ENCODE measurements at regions of chr14 and their contacts with region 1.

Region 1: GRCh38 chr14:102362545-102363181 is at the starts of genes CINP and TECPR2:
- DNase-seq: peak; percentile 99
- H3K4me3 ChIP-seq: peak within 1 kb of the TSS; percentile 80 to 95 (median 90)
- H3K27ac ChIP-seq: peak within 1 kb of the TSS; percentile 94 to 100 (median 98)
- H3K4me1 ChIP-seq: peaks cover 21 to 51% (median 43%) of the 10 kb centered on the region in 4 donors
- H3K27me3 ChIP-seq: no peaks in the 10 kb centered on the region
- CTCF ChIP-seq: no peak
- EP300 ChIP-seq: no peak
- POLR2A ChIP-seq: peak; percentile 72
- total RNA-seq, gene CINP: 21.6 to 27.7 (median 25.4) TPM
- total RNA-seq, gene TECPR2: 28.7 to 54.8 (median 36.6) TPM

Region 2: GRCh38 chr14:102403028-102403427 is 40.4 kb after region 1 on chr14:
- intact Hi-C with region 1: loop called (anchors 5 kb)
- DNase-seq: no peak
- H3K4me3 ChIP-seq: no peak overlapping the region
- H3K27ac ChIP-seq: no peak overlapping the region
- H3K4me1 ChIP-seq: peaks cover 15 to 19% (median 15%) of the 10 kb centered on the region in 4 donors
- H3K27me3 ChIP-seq: no peaks in the 10 kb centered on the region
- CTCF ChIP-seq: no peak
- EP300 ChIP-seq: no peak
- POLR2A ChIP-seq: no peak

Measured in esophagus muscularis mucosa (tissue), 4 donors.